Pancreas (tissue), 10 donors: ENCODE measurements at regions of chr2 and their contacts with region 1.

Region 1: GRCh38 chr2:34570266-34570872 is 971.3 kb upstream of the FAM98A start:
- DNase-seq: peak in 3 of 6 donors; percentile 46 to 64 (median 51)
- ATAC-seq: peak; percentile 90 to 100 (median 95)
- H3K4me3 ChIP-seq: no peak overlapping the region
- H3K27ac ChIP-seq: no peak overlapping the region
- H3K4me1 ChIP-seq: no peaks in the 10 kb centered on the region
- H3K27me3 ChIP-seq: no peaks in the 10 kb centered on the region
- CTCF ChIP-seq: peak in 3 of 4 donors; percentile 21 to 35 (median 28)

Region 2: GRCh38 chr2:34096562-34097171 is 473.7 kb before region 1 on chr2:
- intact Hi-C with region 1: loop called in 1 of 3 experiments (anchors 10 kb)
- DNase-seq: peak in 4 of 6 donors; percentile 37 to 67 (median 48)
- ATAC-seq: peak; percentile 67 to 95 (median 91)
- H3K4me3 ChIP-seq: no peak overlapping the region
- H3K27ac ChIP-seq: no peak overlapping the region
- H3K4me1 ChIP-seq: no peaks in the 10 kb centered on the region
- H3K27me3 ChIP-seq: no peaks in the 10 kb centered on the region
- CTCF ChIP-seq: peak; percentile 81 to 87 (median 86)